ENCODE measurements at regions of chr11 and their contacts with region 1.

Region 1: GRCh38 chr11:63478896-63479295 is 12.1 kb downstream of the PLAAT5 start:
- DNase-seq: no peak
- H3K4me3 ChIP-seq: no peak overlapping the region
- H3K27ac ChIP-seq: no peak overlapping the region
- H3K4me1 ChIP-seq: no peaks in the 10 kb centered on the region
- H3K27me3 ChIP-seq: no peaks in the 10 kb centered on the region
- CTCF ChIP-seq: peak; percentile 94

Region 2: GRCh38 chr11:63146581-63146980 is 332.3 kb before region 1 on chr11:
- intact Hi-C with region 1: no loop called
- DNase-seq: no peak
- H3K4me3 ChIP-seq: no peak overlapping the region
- H3K27ac ChIP-seq: no peak overlapping the region
- H3K4me1 ChIP-seq: peaks cover 5% of the 10 kb centered on the region
- H3K27me3 ChIP-seq: no peaks in the 10 kb centered on the region
- CTCF ChIP-seq: no peak

Region 3: GRCh38 chr11:63635762-63636465 is 157.0 kb after region 1 on chr11:
- intact Hi-C with region 1: loop called (anchors 2 kb)
- DNase-seq: peak; percentile 26
- H3K4me3 ChIP-seq: no peak overlapping the region
- H3K27ac ChIP-seq: no peak overlapping the region
- H3K4me1 ChIP-seq: no peaks in the 10 kb centered on the region
- H3K27me3 ChIP-seq: no peaks in the 10 kb centered on the region
- CTCF ChIP-seq: peak; percentile 86

Region 4: DNA sequence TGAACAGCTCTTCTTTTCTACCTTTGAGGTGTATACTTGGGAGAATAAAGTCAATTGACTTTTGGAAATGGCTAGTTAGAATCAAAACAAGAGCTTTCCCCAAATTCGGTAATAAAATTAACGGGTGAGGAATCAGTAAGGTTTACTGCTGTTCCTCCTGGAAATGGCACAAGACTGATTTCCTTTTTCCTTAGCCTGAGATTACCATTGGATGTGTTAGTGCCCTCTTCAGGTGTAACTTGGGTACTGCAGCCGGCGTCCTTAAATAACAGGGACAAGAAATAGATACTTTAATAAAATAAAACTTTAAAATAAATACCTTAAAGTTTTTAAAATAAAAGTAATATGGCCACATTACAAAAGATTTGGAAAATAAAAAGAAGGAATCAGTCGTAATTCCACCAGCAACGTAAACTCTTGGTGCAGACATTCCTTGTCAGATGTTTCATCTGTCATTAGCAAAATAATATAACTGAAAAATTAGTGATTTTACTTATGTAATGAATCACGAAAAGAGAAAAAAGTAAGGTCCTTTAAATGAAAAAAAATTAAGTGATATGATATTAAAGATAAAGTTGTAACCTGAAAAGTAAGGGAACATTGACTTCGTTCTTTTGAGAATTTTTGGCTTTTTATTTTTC is 259.9 kb after region 1 on chr11:
- intact Hi-C with region 1: loop called (anchors 10 kb)
- DNase-seq: peak; percentile 63
- H3K4me3 ChIP-seq: no peak overlapping the region
- H3K27ac ChIP-seq: no peak overlapping the region
- H3K4me1 ChIP-seq: no peaks in the 10 kb centered on the region
- H3K27me3 ChIP-seq: no peaks in the 10 kb centered on the region
- CTCF ChIP-seq: peak; percentile 99